Activated naive CD4-positive, alpha-beta T cell treated with anti-CD3 and anti-CD28 coated beads for 36 hours (primary cell): ENCODE measurements at regions of chr1 and their contacts with region 1.

Region 1: GRCh38 chr1:226608699-226609505 is 60.3 kb downstream of the STUM start:
- DNase-seq: peak; percentile 79
- H3K4me3 Mint-ChIP-seq: no peak overlapping the region
- H3K27ac Mint-ChIP-seq: no peak overlapping the region
- H3K4me1 Mint-ChIP-seq: no peaks in the 10 kb centered on the region
- H3K27me3 Mint-ChIP-seq: no peaks in the 10 kb centered on the region

Region 2: GRCh38 chr1:226547754-226548191 is 61.1 kb before region 1 on chr1:
- CTCF ChIA-PET with region 1: interaction called, 6 read pairs
- intact Hi-C with region 1: loop called (anchors 1 kb)
- DNase-seq: peak; percentile 82
- H3K4me3 Mint-ChIP-seq: no peak overlapping the region
- H3K27ac Mint-ChIP-seq: no peak overlapping the region
- H3K4me1 Mint-ChIP-seq: peaks cover 10% of the 10 kb centered on the region
- H3K27me3 Mint-ChIP-seq: peaks cover 33% of the 10 kb centered on the region

Region 3: GRCh38 chr1:226962421-226963391 is 353.8 kb after region 1 on chr1:
- CTCF ChIA-PET with region 1: no interaction called
- intact Hi-C with region 1: no loop called
- DNase-seq: no peak
- H3K4me3 Mint-ChIP-seq: no peak overlapping the region
- H3K27ac Mint-ChIP-seq: no peak overlapping the region
- H3K4me1 Mint-ChIP-seq: peaks cover 14% of the 10 kb centered on the region
- H3K27me3 Mint-ChIP-seq: no peaks in the 10 kb centered on the region